Lower lobe of right lung (tissue), 2 donors: ENCODE measurements at regions of chr4 and their contacts with region 1.

Region 1: GRCh38 chr4:140856621-140857062 is 100.5 kb upstream of the TBC1D9 start:
- DNase-seq: no peak
- ATAC-seq: peak in 1 of 2 donors; percentile 24
- H3K4me3 ChIP-seq: no peak overlapping the region
- H3K27ac ChIP-seq: no peak overlapping the region
- H3K4me1 ChIP-seq: no peaks in the 10 kb centered on the region
- H3K27me3 ChIP-seq: peaks cover 3% of the 10 kb centered on the region
- CTCF ChIP-seq: no peak

Region 2: GRCh38 chr4:140523857-140524742 is 332.5 kb before region 1 on chr4 and contains the start of gene ELMOD2:
- intact Hi-C with region 1: no loop called
- DNase-seq: peak; percentile 100
- ATAC-seq: peak; percentile 100
- H3K4me3 ChIP-seq: peak within 1 kb of the TSS; percentile 84
- H3K27ac ChIP-seq: peak within 1 kb of the TSS; percentile 86
- H3K4me1 ChIP-seq: peaks cover 9% of the 10 kb centered on the region
- H3K27me3 ChIP-seq: no peaks in the 10 kb centered on the region
- CTCF ChIP-seq: peak; percentile 97
- total RNA-seq, gene ELMOD2: 22.8 TPM

Region 3: GRCh38 chr4:141020801-141021261 is 164.2 kb after region 1 on chr4:
- intact Hi-C with region 1: no loop called
- DNase-seq: no peak
- ATAC-seq: no peak
- H3K4me3 ChIP-seq: no peak overlapping the region
- H3K27ac ChIP-seq: no peak overlapping the region
- H3K4me1 ChIP-seq: no peaks in the 10 kb centered on the region
- H3K27me3 ChIP-seq: no peaks in the 10 kb centered on the region
- CTCF ChIP-seq: no peak

Region 4: DNA sequence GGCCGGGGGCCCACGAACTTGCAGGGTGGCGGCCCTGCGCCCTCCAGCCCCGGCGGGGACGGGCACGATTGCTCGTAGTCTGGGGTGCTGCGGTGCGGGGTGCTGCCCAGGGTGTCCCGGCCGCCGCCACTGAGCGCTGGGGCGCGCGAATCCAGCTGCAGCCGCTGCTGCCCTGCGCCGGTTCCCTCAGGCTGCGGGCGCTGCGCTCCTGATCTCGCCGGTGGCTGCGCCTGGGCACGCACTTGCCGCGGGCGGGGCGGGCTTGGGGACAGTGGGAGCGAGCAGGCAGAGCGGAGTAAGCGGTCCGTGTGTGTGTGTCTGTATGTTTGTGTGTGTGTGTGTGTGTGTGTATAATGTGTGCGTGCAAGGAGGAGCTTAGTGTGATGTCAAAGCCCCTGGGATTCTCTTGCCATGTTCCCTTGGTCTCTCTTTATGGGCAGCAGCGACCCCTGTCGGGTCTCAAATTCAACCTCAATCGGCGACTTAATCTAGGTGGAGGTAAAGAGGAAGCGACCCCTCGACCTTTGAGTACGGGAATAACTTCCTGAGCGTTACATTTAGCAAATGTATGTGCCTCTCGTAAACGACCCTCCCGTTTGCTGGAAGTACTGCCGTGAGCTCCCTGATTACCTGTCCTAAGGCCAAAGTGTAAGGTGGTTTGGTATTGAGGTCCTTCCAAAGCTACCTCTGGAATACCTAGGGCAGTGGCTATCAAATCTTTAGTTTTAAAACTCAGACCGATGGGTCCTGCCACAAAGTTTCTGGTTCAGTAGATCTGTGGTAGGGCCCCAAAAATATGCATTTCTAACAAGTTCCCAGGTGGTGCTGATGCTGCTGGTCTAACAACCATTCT is 276.7 kb after region 1 on chr4 and contains the start of gene RNF150:
- intact Hi-C with region 1: loop called (anchors 5 kb)
- DNase-seq: peak; percentile 68
- ATAC-seq: peak; percentile 89 to 91
- H3K4me3 ChIP-seq: peak within 1 kb of the TSS; percentile 77
- H3K27ac ChIP-seq: no peak within 1 kb of the TSS
- H3K4me1 ChIP-seq: peaks cover 27% of the 10 kb centered on the region
- H3K27me3 ChIP-seq: peaks cover 46% of the 10 kb centered on the region
- CTCF ChIP-seq: peak; percentile 51
- total RNA-seq, gene RNF150: 3.3 TPM